ENCODE measurements at regions of chr22 and their contacts with region 1.

Region 1: DNA sequence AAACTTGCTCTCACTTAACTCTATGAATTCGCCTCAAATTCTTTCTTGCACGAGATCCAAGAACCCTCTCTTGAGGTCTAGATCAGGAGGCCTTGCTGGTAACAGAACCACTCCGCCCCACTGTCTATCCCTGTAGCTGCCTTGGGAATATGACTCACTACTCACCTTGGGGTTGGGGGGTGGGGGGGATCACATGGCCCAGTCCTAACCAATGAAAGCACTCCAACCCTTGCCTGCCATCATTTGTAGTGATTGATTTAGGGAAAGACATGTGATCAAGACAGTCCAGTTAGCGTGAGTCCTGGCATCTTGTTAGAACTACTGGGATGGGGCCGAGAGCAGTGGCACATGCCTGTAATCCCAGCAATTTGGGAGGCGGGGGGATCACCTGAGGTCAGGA is 4.8 kb upstream of the MRTFA start:
- DNase-seq: no peak
- ATAC-seq: no peak

Region 2: GRCh38 chr22:40525249-40525884 is 115.9 kb before region 1 on chr22:
- intact Hi-C with region 1: loop called (anchors 5 to 10 kb)
- DNase-seq: peak; percentile 61
- ATAC-seq: peak in 1 of 2 donors; percentile 29

Region 3: GRCh38 chr22:40552070-40552469 is 89.2 kb before region 1 on chr22:
- intact Hi-C with region 1: loop called (anchors 5 to 10 kb)
- DNase-seq: peak; percentile 69
- ATAC-seq: peak; percentile 92 to 95

Region 4: GRCh38 chr22:40782518-40782917 is 141.2 kb after region 1 on chr22:
- intact Hi-C with region 1: no loop called
- DNase-seq: no peak
- ATAC-seq: no peak

Measured in left cardiac atrium (tissue), 4 donors.